Ovary (tissue), 10 donors: ENCODE measurements at regions of chr17 and their contacts with region 1.

Region 1: GRCh38 chr17:76467366-76467765 is at the start of gene AANAT:
- DNase-seq: no peak
- H3K4me3 ChIP-seq: no peak within 1 kb of the TSS
- H3K27ac ChIP-seq: no peak within 1 kb of the TSS
- H3K4me1 ChIP-seq: no peaks in the 10 kb centered on the region
- H3K27me3 ChIP-seq: no peaks in the 10 kb centered on the region
- CTCF ChIP-seq: no peak
- EP300 ChIP-seq: no peak
- POLR2A ChIP-seq: no peak
- total RNA-seq, gene AANAT: not detected

Region 2: GRCh38 chr17:76492989-76493501 is 25.7 kb after region 1 on chr17:
- intact Hi-C with region 1: no loop called
- DNase-seq: peak in 3 of 5 donors; percentile 51 to 68 (median 55)
- H3K4me3 ChIP-seq: no peak overlapping the region
- H3K27ac ChIP-seq: peak overlapping the region in 1 of 2 donors; percentile 39
- H3K4me1 ChIP-seq: peaks cover 16% of the 10 kb centered on the region
- H3K27me3 ChIP-seq: no peaks in the 10 kb centered on the region
- CTCF ChIP-seq: no peak
- EP300 ChIP-seq: no peak
- POLR2A ChIP-seq: no peak

Region 3: DNA sequence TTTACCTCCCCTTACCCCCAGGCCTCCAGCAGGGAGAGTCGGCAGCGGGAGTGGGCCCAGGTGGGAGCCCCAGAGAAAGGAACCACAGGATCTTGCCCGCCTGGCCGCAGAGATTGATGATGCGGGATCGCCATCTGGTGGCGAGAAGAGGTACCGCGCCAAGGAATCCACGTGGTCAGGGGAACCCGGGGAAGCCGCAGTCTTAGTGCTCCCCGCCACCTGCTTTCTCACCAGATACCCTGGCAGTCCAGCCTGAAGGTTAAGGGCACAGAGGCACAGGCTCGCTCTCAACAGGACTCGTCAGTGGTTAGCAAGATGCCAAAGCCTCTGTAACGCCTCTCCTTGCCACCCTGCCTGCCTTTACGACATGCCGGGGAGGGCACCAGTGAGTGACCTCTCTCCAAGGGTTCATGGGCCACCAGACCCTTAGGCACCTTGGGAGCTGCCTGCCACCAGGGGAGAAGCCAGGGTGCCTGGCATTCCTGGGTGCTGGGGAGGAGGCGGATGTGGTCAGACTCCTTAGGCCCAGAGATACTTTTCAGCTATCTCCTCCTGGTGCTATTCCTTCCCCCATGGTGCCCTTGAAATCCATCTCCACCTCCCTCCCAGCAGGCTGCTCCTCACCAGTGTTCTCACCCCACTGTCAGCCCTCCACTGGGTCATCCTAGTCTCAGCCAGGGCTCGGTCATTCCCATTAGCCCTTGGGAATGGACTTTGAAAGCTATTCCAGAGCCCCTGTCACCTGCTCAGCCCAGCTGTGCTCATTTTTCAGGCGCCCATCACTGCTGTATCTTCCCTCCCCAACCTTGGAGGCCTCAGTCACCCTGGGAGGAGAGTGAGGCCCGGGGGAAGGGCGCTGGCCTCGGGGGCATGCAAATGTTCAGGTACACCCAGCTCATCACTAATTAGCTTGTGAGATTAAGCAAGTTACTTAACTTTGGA is 39.3 kb after region 1 on chr17:
- intact Hi-C with region 1: loop called (anchors 1 to 2 kb)
- DNase-seq: peak; percentile 74 to 92 (median 88)
- H3K4me3 ChIP-seq: no peak overlapping the region
- H3K27ac ChIP-seq: no peak overlapping the region
- H3K4me1 ChIP-seq: peaks cover 4% of the 10 kb centered on the region
- H3K27me3 ChIP-seq: no peaks in the 10 kb centered on the region
- CTCF ChIP-seq: peak; percentile 80 to 96 (median 96)
- EP300 ChIP-seq: no peak
- POLR2A ChIP-seq: peak; percentile 11